ENCODE measurements at regions of chr7 and their contacts with region 1.

Region 1: DNA sequence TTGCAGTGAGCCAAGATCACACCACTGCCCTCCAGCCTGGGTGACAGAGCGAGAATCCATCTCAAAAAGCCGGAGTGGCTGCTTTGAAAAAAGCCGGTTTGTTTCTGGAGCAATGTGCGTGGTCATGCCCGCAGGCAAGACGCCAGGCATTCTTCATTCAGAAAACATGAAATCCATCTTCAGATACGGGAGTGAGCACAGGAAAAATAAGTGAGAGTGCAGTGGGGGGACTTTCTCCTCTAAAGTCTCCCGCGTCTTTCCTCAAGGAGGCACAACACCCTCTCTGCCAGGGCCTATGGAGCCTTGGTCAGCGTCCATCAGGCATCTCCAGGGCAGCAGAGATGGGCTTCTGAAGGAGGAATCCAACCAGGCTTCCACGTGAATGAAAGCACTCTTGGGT is 62.3 kb upstream of the DGKI start:
- DNase-seq: no peak
- H3K4me3 ChIP-seq: no peak overlapping the region
- H3K27ac ChIP-seq: no peak overlapping the region
- H3K4me1 ChIP-seq: no peaks in the 10 kb centered on the region
- H3K27me3 ChIP-seq: no peaks in the 10 kb centered on the region
- CTCF ChIP-seq: no peak

Region 2: DNA sequence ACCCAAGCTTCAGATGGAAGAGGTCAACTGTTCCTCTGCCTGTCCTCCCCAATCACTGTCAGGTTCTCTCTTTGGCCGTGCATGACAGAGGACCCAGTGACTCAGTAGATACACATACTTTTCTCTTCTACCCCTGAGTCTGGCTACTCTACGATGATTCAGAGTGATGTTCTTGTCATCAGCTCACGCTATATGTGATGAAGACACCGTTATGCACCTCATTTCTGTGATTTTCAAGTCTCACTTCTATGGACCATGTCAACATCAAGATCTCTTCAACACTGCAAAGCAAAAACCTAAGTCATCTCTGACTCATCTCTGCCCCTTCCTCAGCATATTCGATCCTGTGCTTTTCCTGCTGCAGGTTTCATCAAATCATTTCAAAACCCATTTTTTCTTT is 14.3 kb after region 1 on chr7:
- CTCF ChIA-PET with region 1: interaction called, 16 read pairs
- dilution Hi-C with region 1: no loop called
- in situ Hi-C with region 1: no loop called
- intact Hi-C with region 1: no loop called
- DNase-seq: no peak
- H3K4me3 ChIP-seq: no peak overlapping the region
- H3K27ac ChIP-seq: no peak overlapping the region
- H3K4me1 ChIP-seq: no peaks in the 10 kb centered on the region
- H3K27me3 ChIP-seq: no peaks in the 10 kb centered on the region
- CTCF ChIP-seq: no peak

Measured in mammary epithelial cell (primary cell).